CD4-positive, alpha-beta memory T cell (primary cell): ENCODE measurements at regions of chr9 and their contacts with region 1.

Region 1: GRCh38 chr9:6008169-6008979 is 7.0 kb downstream of the RANBP6 start:
- DNase-seq: peak; percentile 90 to 99 (median 95)
- H3K4me3 ChIP-seq: peak overlapping the region in 1 of 2 donors; percentile 82
- H3K4me3 Mint-ChIP-seq: peak overlapping the region; percentile 69 to 93 (median 82)
- H3K27ac ChIP-seq: peak overlapping the region; percentile 83
- H3K27ac Mint-ChIP-seq: peak overlapping the region; percentile 91 to 96 (median 94)
- H3K4me1 ChIP-seq: peaks cover 45% of the 10 kb centered on the region
- H3K4me1 Mint-ChIP-seq: peaks cover 28 to 76% (median 45%) of the 10 kb centered on the region in 4 donors
- H3K27me3 ChIP-seq: no peaks in the 10 kb centered on the region
- H3K27me3 Mint-ChIP-seq: no peaks in the 10 kb centered on the region

Region 2: GRCh38 chr9:4662108-4662988 is 1346.0 kb before region 1 on chr9 and contains the start of gene PLPP6:
- CTCF ChIA-PET with region 1: no interaction called
- POLR2A ChIA-PET with region 1: no interaction called
- intact Hi-C with region 1: loop called (anchors 10 kb)
- DNase-seq: peak; percentile 70 to 86 (median 76)
- H3K4me3 ChIP-seq: peak within 1 kb of the TSS; percentile 42 to 83
- H3K4me3 Mint-ChIP-seq: peak within 1 kb of the TSS; percentile 91 to 99 (median 96)
- H3K27ac ChIP-seq: peak within 1 kb of the TSS; percentile 67
- H3K27ac Mint-ChIP-seq: peak within 1 kb of the TSS; percentile 95 to 99 (median 96)
- H3K4me1 ChIP-seq: peaks cover 58% of the 10 kb centered on the region
- H3K4me1 Mint-ChIP-seq: peaks cover 47 to 78% (median 59%) of the 10 kb centered on the region in 4 donors
- H3K27me3 ChIP-seq: no peaks in the 10 kb centered on the region
- H3K27me3 Mint-ChIP-seq: no peaks in the 10 kb centered on the region
- total RNA-seq, gene PLPP6: 23.3 to 23.8 TPM

Region 3: DNA sequence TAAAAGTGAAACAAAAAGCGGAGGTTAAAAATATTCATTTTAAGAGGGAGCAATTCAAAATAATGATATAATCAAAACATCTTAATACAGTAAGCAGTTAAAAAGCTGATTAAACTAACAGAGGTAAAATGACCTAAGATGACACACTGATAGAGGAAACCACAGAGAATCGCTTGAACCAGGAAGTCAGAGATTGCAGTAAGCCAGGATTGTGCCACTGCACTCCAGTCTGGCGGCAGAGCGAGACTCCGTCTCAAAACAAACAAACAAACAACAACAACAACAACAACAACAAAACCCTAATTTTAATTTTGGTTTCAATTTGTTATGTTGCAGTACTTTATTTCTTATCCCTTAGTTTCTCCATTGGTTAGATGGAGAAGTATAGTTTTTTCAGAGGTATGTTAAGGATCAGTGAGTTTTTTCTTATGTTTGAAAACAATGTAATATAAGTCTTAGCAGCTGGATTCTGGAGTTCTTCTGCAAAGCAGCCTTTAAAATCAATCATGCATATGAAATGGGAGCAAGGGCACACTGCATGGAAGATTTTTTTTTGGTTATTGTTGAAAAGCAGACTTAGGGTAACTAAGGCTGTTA is 59.2 kb before region 1 on chr9:
- CTCF ChIA-PET with region 1: no interaction called
- POLR2A ChIA-PET with region 1: interaction called, 8 read pairs
- intact Hi-C with region 1: loop called (anchors 2 kb)
- DNase-seq: peak; percentile 32 to 50 (median 41)
- H3K4me3 ChIP-seq: no peak overlapping the region
- H3K4me3 Mint-ChIP-seq: peak overlapping the region; percentile 39 to 77 (median 68)
- H3K27ac ChIP-seq: peak overlapping the region; percentile 9
- H3K27ac Mint-ChIP-seq: peak overlapping the region; percentile 31 to 68 (median 48)
- H3K4me1 ChIP-seq: peaks cover 23% of the 10 kb centered on the region
- H3K4me1 Mint-ChIP-seq: peaks cover 10 to 28% (median 16%) of the 10 kb centered on the region in 4 donors
- H3K27me3 ChIP-seq: no peaks in the 10 kb centered on the region
- H3K27me3 Mint-ChIP-seq: no peaks in the 10 kb centered on the region

Region 4: DNA sequence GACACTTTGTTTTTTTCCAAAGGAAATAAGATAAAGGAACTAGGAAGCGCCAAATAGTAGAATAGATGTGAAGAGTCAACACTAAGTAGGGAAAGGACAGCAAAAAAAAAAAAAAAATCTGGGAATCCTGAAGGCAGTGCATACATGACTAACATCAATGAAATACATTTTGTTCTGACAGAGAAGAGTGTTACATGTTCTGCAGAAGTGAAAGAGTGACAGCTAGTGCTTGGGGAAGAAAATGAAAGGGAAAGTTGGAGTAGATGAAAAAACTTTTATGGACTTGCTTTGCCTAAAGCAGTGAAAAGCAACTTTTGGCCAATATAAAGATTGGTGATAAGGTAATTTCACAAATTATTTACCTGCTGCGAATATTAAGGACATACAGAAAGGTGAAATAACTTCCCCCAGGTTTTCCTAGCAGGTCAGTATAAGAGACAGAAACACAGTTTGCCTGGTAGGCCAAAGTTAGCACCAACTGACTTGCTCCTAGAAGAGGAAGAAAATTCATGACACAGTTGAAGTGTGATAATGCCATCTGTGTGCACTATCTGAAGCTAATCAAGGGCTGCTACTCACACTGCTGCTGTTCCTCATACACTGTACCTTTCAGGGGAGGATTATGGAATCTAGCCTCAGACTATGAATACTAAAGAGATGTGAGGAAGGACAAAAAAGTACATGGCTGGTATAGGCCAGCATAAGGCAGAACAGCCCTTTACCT is 31.5 kb before region 1 on chr9:
- CTCF ChIA-PET with region 1: no interaction called
- POLR2A ChIA-PET with region 1: no interaction called
- intact Hi-C with region 1: no loop called
- DNase-seq: no peak
- H3K4me3 ChIP-seq: no peak overlapping the region
- H3K4me3 Mint-ChIP-seq: no peak overlapping the region
- H3K27ac ChIP-seq: no peak overlapping the region
- H3K27ac Mint-ChIP-seq: peak overlapping the region in 3 of 7 donors; percentile 65 to 80 (median 69)
- H3K4me1 ChIP-seq: peaks cover 8% of the 10 kb centered on the region
- H3K4me1 Mint-ChIP-seq: peaks cover 15 to 27% (median 20%) of the 10 kb centered on the region in 4 donors
- H3K27me3 ChIP-seq: no peaks in the 10 kb centered on the region
- H3K27me3 Mint-ChIP-seq: no peaks in the 10 kb centered on the region

Region 5: DNA sequence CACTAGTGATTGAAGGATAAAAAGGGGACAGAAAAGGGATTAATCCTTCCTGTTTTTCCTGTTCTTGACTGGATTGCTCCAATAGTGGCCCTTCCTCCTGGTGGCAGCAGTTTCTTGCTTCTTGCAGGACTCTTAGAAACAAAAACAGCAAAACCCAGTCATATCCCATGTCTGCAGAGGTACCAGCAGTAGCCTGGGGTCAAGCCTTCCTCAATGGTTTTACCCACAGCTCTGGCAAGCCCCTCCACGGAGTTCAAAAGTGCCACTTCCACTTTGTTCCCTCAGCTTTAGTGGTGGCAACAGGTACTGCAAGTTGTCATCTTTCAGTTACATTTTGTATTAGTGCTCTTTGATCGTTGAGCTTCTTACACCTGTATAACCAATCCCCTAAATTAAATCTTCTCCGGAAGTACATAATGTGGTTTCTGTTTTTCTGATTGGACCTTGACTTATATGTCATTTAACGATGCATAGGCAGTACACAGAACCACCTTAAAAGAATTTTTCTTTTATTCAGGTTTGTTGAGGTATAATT is 15.7 kb after region 1 on chr9:
- CTCF ChIA-PET with region 1: interaction called, 17 read pairs
- POLR2A ChIA-PET with region 1: interaction called, 10 read pairs
- intact Hi-C with region 1: no loop called
- DNase-seq: peak in 4 of 5 donors; percentile 19 to 38 (median 30)
- H3K4me3 ChIP-seq: no peak overlapping the region
- H3K4me3 Mint-ChIP-seq: peak overlapping the region in 4 of 8 donors; percentile 36 to 65 (median 42)
- H3K27ac ChIP-seq: no peak overlapping the region
- H3K27ac Mint-ChIP-seq: peak overlapping the region in 4 of 7 donors; percentile 25 to 65 (median 59)
- H3K4me1 ChIP-seq: peaks cover 8% of the 10 kb centered on the region
- H3K4me1 Mint-ChIP-seq: peaks cover 0 to 6% (median 3%) of the 10 kb centered on the region in 4 donors
- H3K27me3 ChIP-seq: no peaks in the 10 kb centered on the region
- H3K27me3 Mint-ChIP-seq: peaks cover 3 to 6% of the 10 kb centered on the region in 2 donors

Region 6: DNA sequence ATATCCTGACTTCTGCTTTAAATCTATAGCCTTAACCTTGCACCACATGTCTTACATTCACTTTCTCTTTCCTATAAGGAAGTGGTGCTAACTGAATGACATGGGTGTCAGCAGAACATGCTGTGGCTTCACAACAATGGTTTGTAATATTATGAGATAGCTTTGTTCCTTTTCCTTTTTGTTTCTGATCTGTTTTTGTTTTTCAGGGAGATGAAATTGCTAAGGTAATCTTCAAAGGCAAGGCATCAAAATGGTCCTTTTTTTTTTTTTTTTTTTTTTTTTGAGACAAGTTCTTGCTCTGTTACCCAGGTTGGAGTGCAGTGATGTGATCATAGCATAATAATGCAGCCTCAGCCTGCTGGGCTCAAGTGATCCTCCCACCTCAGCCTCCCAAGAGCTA is 60.6 kb after region 1 on chr9:
- CTCF ChIA-PET with region 1: no interaction called
- POLR2A ChIA-PET with region 1: interaction called, 15 read pairs
- intact Hi-C with region 1: no loop called
- DNase-seq: peak; percentile 55 to 76 (median 68)
- H3K4me3 ChIP-seq: peak overlapping the region in 1 of 2 donors; percentile 15
- H3K4me3 Mint-ChIP-seq: peak overlapping the region in 7 of 8 donors; percentile 33 to 79 (median 72)
- H3K27ac ChIP-seq: peak overlapping the region; percentile 1
- H3K27ac Mint-ChIP-seq: peak overlapping the region; percentile 50 to 98 (median 91)
- H3K4me1 ChIP-seq: peaks cover 17% of the 10 kb centered on the region
- H3K4me1 Mint-ChIP-seq: peaks cover 10 to 34% (median 16%) of the 10 kb centered on the region in 4 donors
- H3K27me3 ChIP-seq: no peaks in the 10 kb centered on the region
- H3K27me3 Mint-ChIP-seq: no peaks in the 10 kb centered on the region

Region 7: DNA sequence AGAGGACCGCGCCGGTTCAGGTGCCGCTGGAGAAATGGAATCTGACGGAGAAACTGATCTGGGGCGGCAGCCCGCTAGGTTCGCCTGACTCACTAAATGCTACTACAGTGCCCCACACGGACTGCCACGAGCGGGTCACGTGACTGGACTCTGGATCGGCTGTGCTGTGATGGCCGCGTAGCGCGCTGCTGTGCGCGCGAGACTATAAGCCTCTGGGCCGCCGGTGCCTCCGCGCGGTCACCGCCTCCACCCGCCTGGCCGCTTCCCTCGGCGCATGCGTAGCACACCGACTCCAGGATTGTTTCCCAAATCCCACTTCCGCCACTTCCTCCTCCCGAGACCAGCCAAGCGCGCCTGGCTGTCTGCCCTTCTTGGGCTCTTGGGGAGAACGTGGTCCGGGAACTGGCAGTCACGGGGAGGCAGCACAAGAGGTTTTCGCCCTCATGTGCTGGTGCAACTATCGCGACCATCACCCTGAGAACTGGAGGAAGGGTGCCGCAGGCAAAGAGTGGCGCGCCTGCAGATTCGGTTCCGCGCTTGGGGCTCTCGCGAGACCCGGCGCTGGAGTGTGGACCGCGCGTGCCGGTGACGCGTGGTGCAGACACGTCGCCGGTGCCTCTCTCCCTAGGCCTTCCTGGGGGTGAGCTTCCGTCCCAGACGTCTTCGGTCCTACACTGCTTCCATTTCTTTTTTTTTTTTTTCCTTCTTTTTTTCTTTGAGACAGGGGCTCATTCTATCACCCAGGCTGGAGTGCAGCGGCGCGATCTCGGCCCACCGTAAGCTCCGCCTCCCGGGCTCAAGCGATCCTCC is 673.0 kb after region 1 on chr9:
- CTCF ChIA-PET with region 1: no interaction called
- POLR2A ChIA-PET with region 1: no interaction called
- intact Hi-C with region 1: loop called (anchors 1 kb)
- DNase-seq: peak; percentile 92 to 96 (median 94)
- H3K4me3 ChIP-seq: peak overlapping the region; percentile 91 to 99
- H3K4me3 Mint-ChIP-seq: peak overlapping the region; percentile 93 to 97 (median 95)
- H3K27ac ChIP-seq: peak overlapping the region; percentile 82
- H3K27ac Mint-ChIP-seq: peak overlapping the region; percentile 94 to 100 (median 99)
- H3K4me1 ChIP-seq: peaks cover 23% of the 10 kb centered on the region
- H3K4me1 Mint-ChIP-seq: peaks cover 14 to 34% (median 22%) of the 10 kb centered on the region in 4 donors
- H3K27me3 ChIP-seq: no peaks in the 10 kb centered on the region
- H3K27me3 Mint-ChIP-seq: no peaks in the 10 kb centered on the region

Region 8: GRCh38 chr9:7976167-7976755 is 1967.9 kb after region 1 on chr9:
- CTCF ChIA-PET with region 1: no interaction called
- POLR2A ChIA-PET with region 1: no interaction called
- intact Hi-C with region 1: loop called (anchors 5 kb)
- DNase-seq: peak; percentile 84 to 90 (median 89)
- H3K4me3 ChIP-seq: no peak overlapping the region
- H3K4me3 Mint-ChIP-seq: peak overlapping the region; percentile 44 to 81 (median 71)
- H3K27ac ChIP-seq: peak overlapping the region; percentile 51
- H3K27ac Mint-ChIP-seq: peak overlapping the region; percentile 83 to 97 (median 94)
- H3K4me1 ChIP-seq: peaks cover 64% of the 10 kb centered on the region
- H3K4me1 Mint-ChIP-seq: peaks cover 42 to 65% (median 53%) of the 10 kb centered on the region in 4 donors
- H3K27me3 ChIP-seq: no peaks in the 10 kb centered on the region
- H3K27me3 Mint-ChIP-seq: no peaks in the 10 kb centered on the region